ENCODE measurements at regions of chr9 and their contacts with region 1.

Region 1: DNA sequence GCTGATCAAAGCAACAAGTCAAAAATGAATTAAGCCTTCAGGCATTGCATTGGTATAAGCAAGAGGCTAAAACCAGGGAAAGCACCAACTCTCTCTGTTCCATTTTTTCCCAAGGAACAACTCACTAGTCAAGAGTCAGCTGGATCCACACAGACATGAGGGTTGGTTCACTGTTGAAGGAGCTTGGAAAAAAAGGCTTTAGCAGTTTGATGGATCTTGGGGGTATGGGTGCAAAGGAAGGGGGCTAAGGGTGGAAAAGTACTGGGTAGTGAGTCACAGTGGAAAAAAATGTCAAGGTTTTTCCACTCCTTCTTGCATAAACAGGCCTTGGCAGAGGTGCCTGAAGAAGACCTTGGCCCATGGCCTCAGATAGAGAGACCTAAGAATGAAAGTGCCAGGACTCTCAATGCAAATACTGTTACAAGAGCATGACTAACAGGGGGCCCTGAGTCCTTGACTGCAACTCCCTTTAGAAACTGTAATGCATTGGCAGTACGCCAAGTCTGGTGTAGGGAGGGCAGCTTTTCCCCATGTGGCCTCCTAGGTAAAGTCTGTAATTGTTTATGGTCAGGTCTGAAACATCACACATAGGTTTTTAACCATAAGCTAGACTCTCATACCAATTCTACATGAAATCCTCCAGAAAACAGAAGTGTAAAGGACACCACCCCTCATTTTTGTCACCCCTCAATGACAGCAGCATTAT is 23.7 kb downstream of the ACTL7A start:
- DNase-seq: peak; percentile 48 to 88 (median 66)
- ATAC-seq: peak; percentile 92
- H3K4me3 ChIP-seq: no peak overlapping the region
- H3K27ac ChIP-seq: peak overlapping the region; percentile 50; the same call in 2 of the 3 replicates
- H3K4me1 ChIP-seq: peaks cover 3 to 10% of the 10 kb centered on the region in 2 experiments; a peak in 1 of 5 replicates
- H3K27me3 ChIP-seq: no peaks in the 10 kb centered on the region
- CTCF ChIP-seq: no peak
- EP300 ChIP-seq: no peak
- POLR2A ChIP-seq: no peak
- RAD21 ChIP-seq: peak in 1 of 2 experiments; percentile 23; a peak in 1 of 4 replicates

Region 2: GRCh38 chr9:108953983-108954574 is 68.3 kb after region 1 on chr9:
- CTCF ChIA-PET with region 1: interaction called, 13 read pairs
- POLR2A ChIA-PET with region 1: no interaction called
- in situ Hi-C with region 1: no loop called
- intact Hi-C with region 1: loop called (anchors 5 kb)
- DNase-seq: peak in 3 of 4 experiments; percentile 22 to 47 (median 28)
- ATAC-seq: peak; percentile 74
- H3K4me3 ChIP-seq: no peak overlapping the region
- H3K27ac ChIP-seq: no peak overlapping the region
- H3K4me1 ChIP-seq: peaks cover 0 to 5% of the 10 kb centered on the region in 2 experiments; a peak in 2 of 5 replicates
- H3K27me3 ChIP-seq: no peaks in the 10 kb centered on the region
- CTCF ChIP-seq: peak; percentile 38 to 71 (median 41); a peak in 4 of 6 replicates
- EP300 ChIP-seq: no peak
- POLR2A ChIP-seq: no peak
- RAD21 ChIP-seq: peak; percentile 57 to 65

Region 3: DNA sequence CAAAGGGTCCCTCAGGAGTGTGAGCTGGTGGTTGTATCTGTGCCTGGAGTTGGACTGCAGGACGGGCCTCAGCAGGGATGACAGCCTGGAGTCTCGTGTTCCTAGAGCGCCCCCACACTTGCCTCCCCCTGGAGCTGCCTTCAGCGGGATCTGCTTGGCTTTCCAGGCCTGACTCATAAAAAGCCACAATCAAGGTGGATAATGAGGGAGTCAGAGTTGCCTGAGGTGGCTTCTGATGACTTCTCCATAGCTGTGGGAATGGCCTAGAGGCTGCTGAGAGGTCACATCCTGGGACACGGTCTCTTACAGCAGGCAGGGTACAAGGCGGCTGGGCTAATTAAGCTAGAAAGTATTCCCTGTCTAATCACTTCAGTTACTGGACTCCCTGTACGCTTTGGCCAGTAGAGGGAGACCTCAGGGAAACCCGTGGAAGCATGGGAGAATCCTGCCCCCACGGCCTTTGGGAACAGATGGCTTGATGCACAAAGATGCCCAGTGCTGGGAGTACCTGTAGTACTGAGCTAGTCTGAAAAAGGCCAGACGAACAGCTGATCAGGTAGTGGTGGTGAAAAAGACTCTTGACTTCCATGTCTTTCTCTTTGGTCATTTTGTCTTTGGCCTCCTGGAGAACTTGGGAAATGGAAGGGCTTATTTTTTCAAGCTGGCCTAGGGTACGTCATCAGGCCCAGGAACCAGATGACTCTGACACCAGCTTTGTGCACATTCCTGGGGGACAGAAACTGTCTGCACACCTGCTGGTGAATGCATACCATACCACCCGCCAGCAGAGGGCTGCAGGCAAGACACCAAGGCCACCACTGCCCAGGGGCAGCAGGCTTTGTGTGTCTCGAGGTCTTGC is 297.4 kb after region 1 on chr9:
- CTCF ChIA-PET with region 1: no interaction called
- POLR2A ChIA-PET with region 1: no interaction called
- in situ Hi-C with region 1: no loop called
- intact Hi-C with region 1: loop called (anchors 10 kb)
- DNase-seq: peak; percentile 40 to 71 (median 56)
- ATAC-seq: peak; percentile 93
- H3K4me3 ChIP-seq: no peak overlapping the region
- H3K27ac ChIP-seq: no peak overlapping the region
- H3K4me1 ChIP-seq: no peaks in the 10 kb centered on the region; a peak in 3 of 5 replicates
- H3K27me3 ChIP-seq: no peaks in the 10 kb centered on the region; a peak in 1 of 5 replicates
- CTCF ChIP-seq: peak; percentile 59 to 88 (median 69)
- EP300 ChIP-seq: no peak
- POLR2A ChIP-seq: no peak
- RAD21 ChIP-seq: peak; percentile 3 to 21; a peak in 1 of 4 replicates

Measured in K562 (cell line).